ENCODE measurements at regions of chr14 and their contacts with region 1.

Region 1: DNA sequence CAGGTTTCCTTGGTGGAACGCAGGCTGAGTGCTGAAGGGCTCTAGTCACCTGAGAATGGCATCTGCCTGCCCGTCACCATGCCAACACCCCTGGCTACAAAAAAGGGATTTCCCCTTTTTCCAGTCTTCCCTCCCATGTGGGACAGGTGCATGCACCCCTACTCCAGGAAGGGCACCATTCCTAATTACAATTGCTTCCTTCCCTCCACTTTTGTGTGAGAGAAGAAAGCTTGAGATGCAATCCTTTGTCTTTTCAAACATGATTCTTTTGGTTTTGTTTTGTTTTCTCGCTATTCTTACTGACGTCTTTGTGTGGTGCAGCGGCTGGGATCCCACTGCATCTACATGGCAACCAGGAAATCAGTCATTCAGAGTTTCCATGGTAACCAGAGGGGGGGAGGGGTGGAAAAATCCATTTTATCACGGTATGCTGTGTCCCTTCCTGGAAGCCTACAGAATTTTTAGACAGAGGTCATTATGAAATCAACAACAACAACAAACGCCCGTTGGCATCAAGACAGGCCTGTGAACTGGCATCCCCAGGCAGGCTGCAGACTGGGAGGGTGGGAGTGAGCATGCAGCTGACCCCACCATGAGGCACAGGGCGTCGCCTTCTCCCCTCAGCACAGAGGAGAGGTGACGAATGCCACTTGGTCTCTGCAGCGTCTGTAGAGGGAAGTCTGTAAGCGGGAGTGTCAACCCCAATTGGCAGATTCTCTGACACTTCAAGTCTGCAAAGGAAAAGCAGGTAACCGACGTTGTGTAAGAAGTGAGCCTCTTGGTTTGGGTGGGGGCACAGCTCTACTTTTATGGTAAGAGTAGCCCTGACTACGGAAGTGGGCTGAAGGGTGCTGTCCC is 13.6 kb upstream of the GNG2 start:
- DNase-seq: peak; percentile 91
- H3K4me3 Mint-ChIP-seq: peak overlapping the region; percentile 87
- H3K27ac Mint-ChIP-seq: peak overlapping the region; percentile 98
- H3K4me1 Mint-ChIP-seq: peaks cover 75% of the 10 kb centered on the region
- H3K27me3 Mint-ChIP-seq: peaks cover 2% of the 10 kb centered on the region

Region 2: GRCh38 chr14:50736932-50737419 is 1109.9 kb before region 1 on chr14:
- CTCF ChIA-PET with region 1: no interaction called
- POLR2A ChIA-PET with region 1: no interaction called
- intact Hi-C with region 1: loop called (anchors 5 kb)
- DNase-seq: peak; percentile 66
- H3K4me3 Mint-ChIP-seq: no peak overlapping the region
- H3K27ac Mint-ChIP-seq: no peak overlapping the region
- H3K4me1 Mint-ChIP-seq: peaks cover 43% of the 10 kb centered on the region
- H3K27me3 Mint-ChIP-seq: no peaks in the 10 kb centered on the region

Region 3: GRCh38 chr14:51744372-51745130 is 102.3 kb before region 1 on chr14:
- CTCF ChIA-PET with region 1: no interaction called
- POLR2A ChIA-PET with region 1: no interaction called
- intact Hi-C with region 1: loop called (anchors 10 kb)
- DNase-seq: peak; percentile 44
- H3K4me3 Mint-ChIP-seq: no peak overlapping the region
- H3K27ac Mint-ChIP-seq: no peak overlapping the region
- H3K4me1 Mint-ChIP-seq: no peaks in the 10 kb centered on the region
- H3K27me3 Mint-ChIP-seq: peaks cover 4% of the 10 kb centered on the region

Region 4: DNA sequence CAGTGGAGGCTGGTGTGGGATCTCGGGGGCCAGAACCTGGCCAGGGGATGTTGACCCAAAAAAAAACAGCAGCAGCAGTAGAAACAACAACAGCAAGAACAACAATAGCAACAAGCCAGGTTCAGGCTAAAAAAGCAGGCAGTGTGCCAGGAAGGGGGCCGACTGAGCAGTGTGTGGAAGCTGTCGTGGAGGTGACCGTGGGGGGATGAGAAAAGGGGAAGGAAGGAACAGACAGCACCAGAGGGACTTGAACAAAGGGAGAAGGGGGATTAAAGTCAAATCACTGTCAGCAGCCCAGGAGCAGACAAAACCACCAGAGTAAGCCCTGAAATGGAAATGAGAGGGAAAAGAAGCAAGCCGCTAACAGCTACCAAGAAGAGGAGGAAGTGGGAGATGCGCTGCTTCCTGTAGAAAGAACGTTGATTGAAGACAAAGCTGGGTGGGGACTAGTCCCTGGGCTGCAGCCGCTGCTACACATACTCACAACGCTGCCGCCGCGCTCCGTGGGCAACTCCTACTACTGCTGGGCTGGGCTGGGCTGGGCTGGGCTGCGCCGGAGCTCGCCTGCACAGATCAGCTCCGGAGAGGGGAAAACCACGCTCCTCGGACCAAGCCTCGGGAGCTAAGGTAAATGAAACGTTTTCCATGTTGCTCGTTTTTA is 13.4 kb after region 1 on chr14 and contains the start of gene GNG2:
- CTCF ChIA-PET with region 1: interaction called, 26 read pairs
- POLR2A ChIA-PET with region 1: interaction called, 64 read pairs
- intact Hi-C with region 1: loop called (anchors 1 kb)
- DNase-seq: peak; percentile 91
- H3K4me3 Mint-ChIP-seq: peak within 1 kb of the TSS; percentile 96
- H3K27ac Mint-ChIP-seq: peak within 1 kb of the TSS; percentile 96
- H3K4me1 Mint-ChIP-seq: peaks cover 52% of the 10 kb centered on the region
- H3K27me3 Mint-ChIP-seq: no peaks in the 10 kb centered on the region
- total RNA-seq, gene GNG2: 146 TPM

Region 5: DNA sequence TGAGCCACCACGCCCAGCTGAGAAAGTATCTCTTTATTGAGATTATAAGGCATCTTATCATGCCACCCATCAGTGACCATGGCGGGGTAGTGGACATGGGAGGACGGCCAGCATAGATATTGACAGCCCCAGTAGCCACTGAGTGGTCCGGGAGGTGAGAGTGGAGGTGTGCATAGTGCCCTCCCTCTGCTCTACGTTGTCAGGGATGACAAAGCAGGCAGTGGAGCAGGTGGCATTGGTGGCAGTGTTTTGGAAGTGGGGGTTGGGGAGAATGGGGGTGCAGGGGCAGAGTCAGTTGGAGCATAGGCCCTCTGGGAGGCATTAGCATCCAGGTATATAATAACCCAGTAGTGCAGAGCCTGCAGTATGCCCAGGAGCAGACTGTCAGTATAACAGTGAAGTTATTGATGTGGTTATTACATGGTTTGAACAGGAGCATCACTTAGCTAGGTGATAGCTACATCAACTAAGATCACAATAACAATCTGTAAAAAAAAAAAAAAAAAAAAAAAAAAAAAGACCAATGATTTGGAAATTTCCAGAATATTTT is 54.7 kb after region 1 on chr14:
- CTCF ChIA-PET with region 1: no interaction called
- POLR2A ChIA-PET with region 1: interaction called, 13 read pairs
- intact Hi-C with region 1: loop called (anchors 1 kb)
- DNase-seq: no peak
- H3K4me3 Mint-ChIP-seq: no peak overlapping the region
- H3K27ac Mint-ChIP-seq: peak overlapping the region; percentile 6
- H3K4me1 Mint-ChIP-seq: peaks cover 69% of the 10 kb centered on the region
- H3K27me3 Mint-ChIP-seq: no peaks in the 10 kb centered on the region

Region 6: GRCh38 chr14:52142504-52142903 is 295.6 kb after region 1 on chr14:
- CTCF ChIA-PET with region 1: no interaction called
- POLR2A ChIA-PET with region 1: no interaction called
- intact Hi-C with region 1: no loop called
- DNase-seq: no peak
- H3K4me3 Mint-ChIP-seq: no peak overlapping the region
- H3K27ac Mint-ChIP-seq: no peak overlapping the region
- H3K4me1 Mint-ChIP-seq: no peaks in the 10 kb centered on the region
- H3K27me3 Mint-ChIP-seq: no peaks in the 10 kb centered on the region

Region 7: GRCh38 chr14:52325126-52325525 is 478.3 kb after region 1 on chr14:
- CTCF ChIA-PET with region 1: no interaction called
- POLR2A ChIA-PET with region 1: no interaction called
- intact Hi-C with region 1: loop called (anchors 5 kb)
- DNase-seq: peak; percentile 53
- H3K4me3 Mint-ChIP-seq: no peak overlapping the region
- H3K27ac Mint-ChIP-seq: peak overlapping the region; percentile 50
- H3K4me1 Mint-ChIP-seq: peaks cover 72% of the 10 kb centered on the region
- H3K27me3 Mint-ChIP-seq: no peaks in the 10 kb centered on the region

Measured in activated CD4-positive, alpha-beta memory T cell treated with anti-CD3 and anti-CD28 coated beads for 36 hours (primary cell).